Activated B cell treated with CpG ODN at 0.5 μM for 24 hours (primary cell): ENCODE measurements at regions of chr14 and their contacts with region 1.

Region 1: DNA sequence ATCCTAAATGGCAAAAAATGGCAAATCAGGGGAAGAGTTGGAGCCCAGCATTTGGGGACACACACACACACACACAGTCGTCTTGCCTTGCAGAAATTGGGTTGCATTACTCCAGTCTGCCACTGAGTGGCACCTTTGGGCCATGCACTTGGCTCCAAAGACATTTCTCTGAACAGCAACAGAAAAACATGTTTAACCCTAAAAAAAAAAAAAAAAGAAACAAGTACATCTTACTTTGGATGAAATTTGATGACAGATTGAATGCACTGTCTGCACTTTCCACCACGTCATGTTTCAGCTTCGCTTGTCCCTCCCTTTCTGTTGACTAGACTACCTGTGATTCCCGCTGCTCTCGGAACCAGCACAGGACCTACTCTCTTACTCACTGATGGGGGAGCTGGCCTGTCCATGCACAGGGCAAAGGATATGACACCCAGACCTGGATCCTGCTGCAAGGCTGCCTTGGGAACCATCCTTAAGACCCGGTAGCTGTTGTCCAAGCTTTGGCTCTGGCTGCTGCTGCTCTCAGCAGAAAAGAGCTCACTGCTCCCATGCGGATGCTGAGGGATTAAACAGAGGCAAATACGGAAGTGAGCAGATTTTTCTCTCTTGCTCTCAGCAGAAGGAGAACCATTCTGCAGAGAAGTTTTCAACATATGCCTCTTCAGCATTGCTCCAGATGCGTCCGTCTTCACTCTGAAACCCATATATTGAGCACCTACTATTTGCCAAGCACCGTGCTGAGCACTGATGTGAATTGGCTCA is 376.8 kb downstream of the DPF3 start:
- DNase-seq: peak; percentile 56
- ATAC-seq: peak; percentile 62
- H3K4me3 Mint-ChIP-seq: peak overlapping the region; percentile 30
- H3K27ac Mint-ChIP-seq: peak overlapping the region; percentile 96
- H3K4me1 Mint-ChIP-seq: peaks cover 58% of the 10 kb centered on the region
- H3K27me3 Mint-ChIP-seq: no peaks in the 10 kb centered on the region
- CTCF ChIP-seq: peak; percentile 90

Region 2: DNA sequence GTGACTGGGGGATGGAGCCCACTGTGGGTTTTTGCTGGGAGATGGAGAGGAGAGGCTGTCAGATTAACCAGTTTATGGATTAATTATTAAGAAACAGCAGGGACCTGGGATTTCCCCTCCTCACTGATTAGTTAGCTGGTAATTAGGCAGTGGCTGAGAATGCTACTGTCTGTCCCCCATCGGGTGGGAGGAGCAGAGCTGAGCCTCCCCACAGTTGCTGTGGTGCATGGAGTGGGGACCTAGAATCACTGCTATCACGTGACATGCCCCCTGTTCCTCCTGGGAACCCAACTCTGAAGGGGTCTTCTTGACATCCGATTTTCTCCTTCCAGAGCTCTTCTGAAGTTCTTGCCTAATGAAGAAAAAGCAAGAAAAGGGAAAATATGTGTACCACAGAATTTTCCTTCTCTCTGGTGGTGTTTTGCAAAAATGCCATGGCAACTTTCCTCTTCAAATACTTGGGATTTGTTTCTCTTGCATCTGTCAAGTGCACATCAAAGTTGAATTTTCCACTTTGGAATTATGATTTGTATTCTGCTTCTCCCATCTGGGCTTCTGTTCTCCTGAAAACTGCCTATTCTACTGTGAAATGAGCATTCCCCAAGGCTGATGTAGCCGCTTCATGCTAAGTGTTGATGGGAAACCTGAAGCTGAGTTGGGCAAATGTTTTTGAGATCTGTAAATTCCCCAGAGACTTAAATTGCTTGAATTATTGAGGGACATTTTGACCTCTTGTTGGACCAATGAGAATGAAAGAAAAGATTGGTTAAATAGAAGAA is 320.7 kb before region 1 on chr14:
- CTCF ChIA-PET with region 1: no interaction called
- POLR2A ChIA-PET with region 1: no interaction called
- intact Hi-C with region 1: no loop called
- DNase-seq: no peak
- ATAC-seq: no peak
- H3K4me3 Mint-ChIP-seq: no peak overlapping the region
- H3K27ac Mint-ChIP-seq: no peak overlapping the region
- H3K4me1 Mint-ChIP-seq: no peaks in the 10 kb centered on the region
- H3K27me3 Mint-ChIP-seq: peaks cover 6% of the 10 kb centered on the region
- CTCF ChIP-seq: no peak

Region 3: GRCh38 chr14:72594099-72594901 is 77.2 kb after region 1 on chr14:
- CTCF ChIA-PET with region 1: interaction called, 3 read pairs
- POLR2A ChIA-PET with region 1: no interaction called
- intact Hi-C with region 1: loop called (anchors 2 kb)
- DNase-seq: no peak
- ATAC-seq: no peak
- H3K4me3 Mint-ChIP-seq: peak overlapping the region; percentile 21
- H3K27ac Mint-ChIP-seq: no peak overlapping the region
- H3K4me1 Mint-ChIP-seq: peaks cover 58% of the 10 kb centered on the region
- H3K27me3 Mint-ChIP-seq: no peaks in the 10 kb centered on the region
- CTCF ChIP-seq: no peak

Region 4: DNA sequence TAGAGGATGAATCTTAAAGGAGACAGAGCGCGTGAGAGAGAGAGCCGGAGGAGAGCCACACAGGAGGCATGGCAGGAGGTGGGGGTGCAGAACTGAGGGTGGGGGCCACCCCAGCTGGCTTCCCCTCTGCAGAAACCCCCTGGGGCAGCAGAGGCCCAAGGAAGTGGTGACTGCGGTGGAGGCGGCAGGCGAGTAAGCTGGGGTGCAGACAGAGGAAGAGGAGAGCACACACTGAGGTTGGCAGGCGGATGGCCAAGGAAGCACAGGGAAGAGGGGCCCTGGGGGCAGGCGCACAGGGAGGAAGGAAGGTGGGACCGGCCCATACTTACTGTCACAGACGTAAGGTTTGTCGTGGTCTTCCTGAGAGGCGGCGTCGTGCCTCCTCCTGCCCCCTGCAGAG is 197.0 kb after region 1 on chr14:
- CTCF ChIA-PET with region 1: interaction called, 5 read pairs
- POLR2A ChIA-PET with region 1: interaction called, 7 read pairs
- intact Hi-C with region 1: loop called (anchors 10 kb)
- DNase-seq: peak; percentile 44
- ATAC-seq: peak; percentile 90
- H3K4me3 Mint-ChIP-seq: peak overlapping the region; percentile 63
- H3K27ac Mint-ChIP-seq: peak overlapping the region; percentile 68
- H3K4me1 Mint-ChIP-seq: peaks cover 54% of the 10 kb centered on the region
- H3K27me3 Mint-ChIP-seq: no peaks in the 10 kb centered on the region
- CTCF ChIP-seq: no peak

Region 5: GRCh38 chr14:72893636-72894321 is 376.7 kb after region 1 on chr14 and contains the start of gene DPF3:
- CTCF ChIA-PET with region 1: interaction called, 27 read pairs
- POLR2A ChIA-PET with region 1: interaction called, 6 read pairs
- intact Hi-C with region 1: loop called (anchors 1 kb)
- DNase-seq: peak; percentile 91
- ATAC-seq: peak; percentile 98
- H3K4me3 Mint-ChIP-seq: peak within 1 kb of the TSS; percentile 98
- H3K27ac Mint-ChIP-seq: peak within 1 kb of the TSS; percentile 83
- H3K4me1 Mint-ChIP-seq: peaks cover 35% of the 10 kb centered on the region
- H3K27me3 Mint-ChIP-seq: peaks cover 3% of the 10 kb centered on the region
- CTCF ChIP-seq: no peak
- total RNA-seq, gene DPF3: 3.5 and 4.3 TPM in 2 replicates

Region 6: DNA sequence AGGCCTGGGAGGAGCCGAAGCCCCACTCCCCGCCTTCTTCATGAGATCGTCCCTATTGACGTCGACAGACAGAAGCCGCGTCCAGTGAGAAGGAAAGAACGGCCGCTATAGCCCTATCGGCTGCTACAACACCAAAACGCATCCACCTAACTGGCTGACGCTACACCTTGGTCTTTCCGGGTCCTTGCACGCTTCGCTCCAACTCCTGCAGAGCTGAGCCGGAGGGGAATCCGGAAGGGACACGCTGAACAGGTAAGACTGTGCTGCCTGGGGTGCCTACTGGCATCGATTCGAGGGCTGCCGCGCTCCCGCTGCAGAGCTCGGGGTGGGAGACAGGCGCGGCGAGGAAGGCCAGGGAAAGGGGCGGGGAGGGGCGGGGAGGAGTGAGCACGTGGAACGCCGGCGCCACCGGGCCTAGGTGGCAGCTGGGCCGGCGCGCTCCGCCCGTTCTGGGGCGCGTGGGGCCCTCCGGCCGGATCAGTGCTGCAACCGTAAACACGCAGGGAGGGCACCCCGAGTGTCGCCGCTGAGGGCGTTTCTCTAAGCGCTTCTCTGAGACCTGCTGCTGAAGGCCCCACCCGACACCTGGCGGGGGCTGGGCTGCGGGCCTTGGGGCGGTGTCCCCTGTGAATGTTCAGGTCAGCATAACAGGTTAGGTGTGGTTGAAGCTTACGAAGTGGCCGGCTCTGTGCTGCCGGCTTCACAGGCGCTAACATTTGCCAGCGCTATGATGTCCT is 409.3 kb after region 1 on chr14 and contains the start of gene DCAF4:
- CTCF ChIA-PET with region 1: interaction called, 3 read pairs
- POLR2A ChIA-PET with region 1: no interaction called
- intact Hi-C with region 1: loop called (anchors 1 kb)
- DNase-seq: peak; percentile 86
- ATAC-seq: peak; percentile 94
- H3K4me3 Mint-ChIP-seq: peak within 1 kb of the TSS; percentile 98
- H3K27ac Mint-ChIP-seq: peak within 1 kb of the TSS; percentile 98
- H3K4me1 Mint-ChIP-seq: peaks cover 19% of the 10 kb centered on the region
- H3K27me3 Mint-ChIP-seq: no peaks in the 10 kb centered on the region
- CTCF ChIP-seq: no peak
- total RNA-seq, gene DCAF4: 33.9 and 38.7 TPM in 2 replicates